ENCODE measurements at regions of chr12 and their contacts with region 1.

Region 1: DNA sequence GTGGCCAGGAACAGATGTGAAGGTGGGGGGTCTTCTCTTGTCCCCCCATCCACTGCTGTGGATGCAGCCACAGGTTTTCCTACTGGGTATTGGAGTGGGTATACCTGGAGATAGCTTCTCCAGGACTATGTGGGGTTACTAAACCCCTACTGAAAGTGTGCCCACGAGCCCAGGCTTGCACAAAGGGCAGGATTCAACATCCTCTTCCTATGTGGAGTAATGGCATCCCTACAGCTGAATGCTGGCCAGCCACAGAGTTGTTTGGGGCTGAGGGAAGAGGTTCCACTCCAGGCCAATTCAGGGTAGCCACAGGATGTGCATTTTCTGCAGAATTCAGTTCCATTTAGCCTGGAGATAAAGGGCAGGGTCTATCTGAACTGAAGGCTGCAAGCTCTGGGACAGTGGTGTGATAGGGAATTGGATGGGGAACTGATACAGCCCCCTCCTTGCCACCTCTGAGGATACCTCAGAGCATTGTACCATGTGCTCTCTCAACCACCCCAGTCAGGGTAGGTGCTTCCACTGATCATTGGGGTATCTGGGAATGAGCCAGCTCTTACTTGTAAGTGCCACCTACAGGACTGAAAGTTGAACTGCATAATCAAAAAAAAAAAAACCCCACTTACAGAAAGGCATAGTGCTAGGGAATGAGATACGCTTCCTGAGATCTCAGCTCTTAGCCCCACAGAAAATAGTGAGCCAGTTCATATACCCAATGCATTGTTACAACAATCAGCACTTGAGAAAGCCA is 187.1 kb downstream of the KITLG start:
- DNase-seq: no peak
- H3K4me3 Mint-ChIP-seq: no peak overlapping the region
- H3K27ac Mint-ChIP-seq: no peak overlapping the region
- H3K4me1 Mint-ChIP-seq: peaks cover 36% of the 10 kb centered on the region
- H3K27me3 Mint-ChIP-seq: peaks cover 4% of the 10 kb centered on the region

Region 2: DNA sequence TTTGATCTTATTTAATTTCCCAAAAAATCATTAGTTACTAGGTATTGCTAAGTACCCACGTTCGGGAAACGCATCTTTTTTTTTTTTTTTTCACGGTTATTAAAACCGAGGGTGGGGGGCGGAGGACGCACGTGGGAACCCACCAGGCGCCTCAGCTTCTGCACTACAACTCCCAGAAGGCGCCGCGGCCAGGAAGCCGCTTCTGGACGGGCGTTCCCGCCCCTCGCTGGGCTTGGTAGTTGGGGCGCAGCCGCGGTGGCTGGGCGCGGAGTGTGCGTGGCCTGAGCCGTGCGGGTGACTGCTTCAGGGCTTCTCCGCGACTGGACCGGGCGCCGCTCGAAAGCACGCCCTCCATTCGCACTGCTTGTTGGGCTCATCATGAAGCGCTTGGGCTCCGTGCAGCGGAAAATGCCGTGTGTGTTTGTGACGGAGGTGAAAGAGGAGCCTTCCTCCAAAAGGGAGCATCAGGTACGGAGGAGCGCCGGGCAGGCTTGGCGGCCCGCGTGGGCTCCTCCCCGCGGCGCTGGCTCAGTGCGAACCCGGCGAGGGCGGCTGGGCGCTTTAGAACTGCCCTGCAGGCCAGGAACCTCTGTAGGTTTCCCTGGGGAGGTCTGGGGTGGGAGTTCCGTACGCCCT is 357.8 kb before region 1 on chr12:
- intact Hi-C with region 1: loop called (anchors 10 kb)
- DNase-seq: peak; percentile 84
- H3K4me3 Mint-ChIP-seq: peak overlapping the region; percentile 99
- H3K27ac Mint-ChIP-seq: peak overlapping the region; percentile 95
- H3K4me1 Mint-ChIP-seq: peaks cover 45% of the 10 kb centered on the region
- H3K27me3 Mint-ChIP-seq: no peaks in the 10 kb centered on the region

Region 3: DNA sequence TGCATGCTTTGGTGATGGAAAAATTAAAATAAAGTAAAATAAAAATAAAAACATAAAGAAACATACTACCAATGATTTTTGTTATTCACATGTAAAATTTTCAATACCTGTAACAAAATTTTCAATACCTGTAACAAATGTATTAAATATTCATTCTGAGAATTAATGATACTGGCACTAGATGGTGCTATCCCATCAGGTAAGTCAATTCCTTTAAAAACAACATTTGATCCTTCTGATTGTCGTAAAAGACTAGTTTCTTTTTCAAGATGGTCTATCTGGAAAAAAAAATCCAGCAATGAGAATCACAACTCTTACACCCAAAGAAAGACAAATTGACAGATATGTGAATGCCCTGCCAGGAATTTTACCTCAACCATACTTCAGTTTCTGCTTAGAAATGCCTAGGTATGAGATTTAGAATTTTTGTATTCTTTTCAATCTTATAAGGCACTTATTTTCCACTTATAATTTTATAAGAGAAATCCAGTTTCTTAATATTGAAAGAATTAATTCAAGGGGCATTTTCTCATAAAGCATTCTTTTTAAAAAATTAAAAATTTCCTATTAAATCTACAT is 282.0 kb before region 1 on chr12:
- intact Hi-C with region 1: loop called (anchors 1 kb)
- DNase-seq: no peak
- H3K4me3 Mint-ChIP-seq: no peak overlapping the region
- H3K27ac Mint-ChIP-seq: peak overlapping the region; percentile 46
- H3K4me1 Mint-ChIP-seq: peaks cover 3% of the 10 kb centered on the region
- H3K27me3 Mint-ChIP-seq: no peaks in the 10 kb centered on the region

Region 4: DNA sequence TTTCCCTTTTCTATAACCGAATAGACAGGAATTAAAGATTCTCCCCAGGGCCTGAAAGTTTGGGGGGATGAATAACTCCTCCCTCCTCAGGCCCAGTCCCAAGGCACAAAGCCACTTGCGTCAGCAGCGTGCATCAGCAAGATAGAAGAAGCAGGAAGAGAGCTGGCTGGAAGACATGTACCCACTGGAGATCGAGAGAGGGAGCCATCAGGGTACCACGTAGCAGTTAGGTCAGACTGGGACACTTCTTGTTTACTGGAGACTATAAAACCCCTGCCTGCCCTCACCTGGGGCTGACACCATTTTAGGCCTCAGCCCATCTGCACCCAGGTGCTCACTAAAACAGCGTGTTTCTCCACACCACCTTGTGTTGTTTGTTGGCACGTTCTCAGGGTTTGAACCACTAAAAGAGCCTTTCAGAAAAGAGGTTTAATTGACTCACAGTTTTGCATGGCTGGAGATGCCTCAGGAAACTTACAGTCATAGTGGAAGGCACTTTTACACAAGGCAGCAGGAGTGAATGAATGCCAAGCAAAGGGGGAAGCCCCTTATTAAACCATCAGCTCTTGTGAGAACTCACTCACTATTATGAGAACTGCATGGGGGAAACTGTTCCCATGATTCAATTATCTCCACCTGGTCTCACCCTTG is 157.9 kb before region 1 on chr12:
- intact Hi-C with region 1: loop called (anchors 1 kb)
- DNase-seq: no peak
- H3K4me3 Mint-ChIP-seq: no peak overlapping the region
- H3K27ac Mint-ChIP-seq: peak overlapping the region; percentile 34
- H3K4me1 Mint-ChIP-seq: peaks cover 30% of the 10 kb centered on the region
- H3K27me3 Mint-ChIP-seq: no peaks in the 10 kb centered on the region

Region 5: DNA sequence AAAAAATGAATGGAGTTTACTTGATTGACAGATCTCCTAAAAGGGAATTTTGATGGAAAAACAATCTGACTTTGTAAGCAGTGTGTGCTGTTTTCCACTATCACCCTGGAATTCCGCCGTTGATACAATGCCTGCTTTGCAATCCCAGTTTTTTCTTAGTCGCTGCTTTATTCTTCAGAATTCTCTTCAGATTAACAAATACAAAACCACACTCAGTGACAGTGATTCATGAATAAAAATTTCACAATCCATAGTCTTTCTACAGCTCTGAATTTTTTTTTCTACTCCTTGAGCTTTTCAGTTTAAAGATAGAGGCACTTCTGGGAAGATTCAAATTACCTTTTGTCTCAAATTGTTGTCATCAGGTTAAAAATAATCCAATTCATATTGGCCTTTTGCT is 231.7 kb after region 1 on chr12:
- intact Hi-C with region 1: no loop called
- DNase-seq: no peak
- H3K4me3 Mint-ChIP-seq: no peak overlapping the region
- H3K27ac Mint-ChIP-seq: no peak overlapping the region
- H3K4me1 Mint-ChIP-seq: no peaks in the 10 kb centered on the region
- H3K27me3 Mint-ChIP-seq: no peaks in the 10 kb centered on the region